MCF 10A (cell line): ENCODE measurements at regions of chr3 and their contacts with region 1.

Region 1: DNA sequence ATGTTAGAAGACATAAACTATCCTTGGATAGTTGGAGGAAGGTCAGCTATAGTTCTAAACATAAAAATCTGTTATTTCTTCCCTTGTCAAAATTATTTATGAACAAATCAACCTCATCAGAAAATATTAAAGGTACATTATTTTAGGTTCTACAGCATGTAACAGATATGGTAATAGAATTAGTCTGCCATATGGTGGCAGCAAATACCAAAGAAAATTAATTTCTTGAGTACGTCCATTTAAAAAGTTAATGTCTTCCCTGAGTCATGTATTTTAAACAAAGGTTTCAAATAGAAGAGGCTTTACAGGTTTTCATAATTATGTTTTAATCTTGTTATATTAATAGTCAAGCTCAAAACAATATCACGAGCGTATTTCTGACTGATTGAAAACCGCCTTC is 17.9 kb upstream of the ANKRD28 start:
- DNase-seq: peak; percentile 68
- H3K4me3 Mint-ChIP-seq: no peak overlapping the region
- H3K27ac Mint-ChIP-seq: peak overlapping the region; percentile 27
- H3K4me1 Mint-ChIP-seq: peaks cover 18% of the 10 kb centered on the region
- H3K27me3 Mint-ChIP-seq: no peaks in the 10 kb centered on the region
- CTCF ChIP-seq: peak; percentile 43

Region 2: GRCh38 chr3:15427182-15427880 is 388.4 kb before region 1 on chr3 and contains the starts of genes EAF1 and METTL6:
- CTCF ChIA-PET with region 1: no interaction called
- POLR2A ChIA-PET with region 1: no interaction called
- intact Hi-C with region 1: loop called (anchors 10 kb)
- DNase-seq: peak; percentile 76
- H3K4me3 Mint-ChIP-seq: peak within 1 kb of the TSS; percentile 91
- H3K27ac Mint-ChIP-seq: peak within 1 kb of the TSS; percentile 98
- H3K4me1 Mint-ChIP-seq: peaks cover 25% of the 10 kb centered on the region
- H3K27me3 Mint-ChIP-seq: no peaks in the 10 kb centered on the region
- CTCF ChIP-seq: no peak
- total RNA-seq, gene EAF1: 28.3 and 29.8 TPM in 2 replicates
- total RNA-seq, gene METTL6: 26.7 and 28.1 TPM in 2 replicates

Region 3: DNA sequence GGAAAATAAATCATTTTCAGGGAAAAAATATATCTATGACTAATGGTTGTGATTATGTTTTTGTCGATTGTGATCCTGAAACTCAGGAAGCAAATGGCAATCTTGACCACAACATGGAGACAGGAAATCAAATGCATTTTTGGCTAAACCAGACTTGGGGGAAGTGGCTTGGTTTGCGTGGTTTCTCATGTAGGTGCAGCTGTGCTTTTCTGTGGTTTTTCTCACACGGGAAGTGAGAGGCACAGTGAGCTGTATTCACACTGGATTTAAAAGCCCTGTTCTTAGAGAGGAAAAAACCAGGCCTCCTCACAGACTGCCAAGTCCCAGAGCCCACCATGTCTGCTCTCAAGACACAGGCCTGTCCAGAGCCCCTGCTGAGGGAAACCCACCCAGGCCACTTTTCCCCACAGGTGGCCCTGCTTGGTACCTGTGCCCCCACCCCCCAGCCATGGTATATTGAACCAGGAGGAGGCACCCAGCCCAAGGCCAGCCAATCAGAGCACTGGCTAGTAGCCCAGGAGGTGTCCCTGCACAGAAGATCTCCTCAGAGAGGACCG is 168.0 kb before region 1 on chr3:
- CTCF ChIA-PET with region 1: no interaction called
- POLR2A ChIA-PET with region 1: interaction called, 3 read pairs
- intact Hi-C with region 1: loop called (anchors 5 kb)
- DNase-seq: peak; percentile 81
- H3K4me3 Mint-ChIP-seq: peak overlapping the region; percentile 64
- H3K27ac Mint-ChIP-seq: peak overlapping the region; percentile 93
- H3K4me1 Mint-ChIP-seq: peaks cover 37% of the 10 kb centered on the region
- H3K27me3 Mint-ChIP-seq: no peaks in the 10 kb centered on the region
- CTCF ChIP-seq: no peak

Region 4: DNA sequence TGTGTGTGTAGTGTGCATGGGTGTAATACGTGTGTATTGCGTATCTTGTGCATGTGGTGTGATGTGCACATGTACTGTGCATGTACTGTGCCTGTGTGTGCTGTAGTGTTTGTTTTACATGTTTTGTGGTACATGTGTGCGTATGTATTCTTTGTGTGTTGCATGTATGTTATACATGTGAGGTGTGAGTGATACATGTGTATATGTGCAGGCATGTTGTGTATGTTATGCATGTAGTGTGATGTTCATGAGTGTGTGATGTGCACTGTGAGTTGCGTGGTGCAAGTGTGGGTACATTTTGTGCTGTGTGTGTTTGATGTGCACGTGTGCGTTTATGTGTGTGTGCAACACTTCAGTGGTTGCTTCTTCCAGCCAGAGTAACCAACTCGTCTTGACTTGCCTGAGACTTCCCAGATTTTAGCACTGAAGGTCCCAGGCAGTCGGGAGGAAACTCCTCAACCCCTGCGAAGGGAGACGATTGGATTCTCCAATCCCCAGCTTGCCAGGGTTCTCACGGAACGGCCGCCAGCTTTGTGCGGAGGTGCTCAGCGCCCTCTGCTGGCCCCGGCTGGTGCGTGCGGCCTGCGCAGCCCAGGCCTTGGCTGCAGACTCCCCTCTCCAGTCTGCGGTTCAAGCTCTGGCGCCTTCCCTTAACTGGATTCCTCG is 362.4 kb after region 1 on chr3:
- CTCF ChIA-PET with region 1: interaction called, 7 read pairs
- POLR2A ChIA-PET with region 1: no interaction called
- intact Hi-C with region 1: loop called (anchors 1 kb)
- DNase-seq: peak; percentile 83
- H3K4me3 Mint-ChIP-seq: peak overlapping the region; percentile 73
- H3K27ac Mint-ChIP-seq: no peak overlapping the region
- H3K4me1 Mint-ChIP-seq: peaks cover 62% of the 10 kb centered on the region
- H3K27me3 Mint-ChIP-seq: no peaks in the 10 kb centered on the region
- CTCF ChIP-seq: peak; percentile 95

Region 5: DNA sequence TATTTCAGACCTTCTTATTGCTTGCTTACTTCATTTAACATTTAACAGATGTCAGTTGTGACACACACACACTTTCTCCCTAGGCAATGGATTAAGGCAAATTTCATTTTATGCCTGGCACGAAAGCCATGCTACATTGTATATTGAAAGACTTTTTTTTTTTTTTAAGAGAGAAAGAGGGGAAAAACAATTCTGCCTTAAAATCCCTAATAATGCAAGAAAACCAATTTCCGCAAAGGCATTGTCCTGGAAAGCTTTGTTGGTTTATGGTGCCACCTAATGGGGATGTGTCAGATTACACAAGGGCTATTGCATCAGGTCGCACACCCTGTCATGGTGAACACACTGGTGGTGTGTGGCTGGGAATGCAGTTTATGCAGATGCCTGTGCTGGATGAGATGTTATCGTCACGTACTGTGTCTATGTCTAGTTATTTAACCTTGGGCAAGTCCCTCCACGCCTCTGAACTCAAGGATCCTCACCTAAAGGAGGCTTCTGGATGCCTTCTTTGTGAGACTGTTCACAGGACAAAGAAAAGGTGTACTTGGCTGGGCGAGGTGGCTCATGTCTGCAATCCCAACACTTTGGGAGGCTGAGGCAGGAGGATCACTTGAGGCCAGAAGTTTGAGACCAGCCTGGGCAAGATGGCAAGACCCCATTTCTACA is 735.1 kb after region 1 on chr3:
- CTCF ChIA-PET with region 1: interaction called, 5 read pairs
- POLR2A ChIA-PET with region 1: no interaction called
- intact Hi-C with region 1: loop called (anchors 2 kb)
- DNase-seq: peak; percentile 90
- H3K4me3 Mint-ChIP-seq: no peak overlapping the region
- H3K27ac Mint-ChIP-seq: peak overlapping the region; percentile 54
- H3K4me1 Mint-ChIP-seq: peaks cover 22% of the 10 kb centered on the region
- H3K27me3 Mint-ChIP-seq: peaks cover 20% of the 10 kb centered on the region
- CTCF ChIP-seq: peak; percentile 82